ENCODE measurements at regions of chr1 and their contacts with region 1.

Region 1: GRCh38 chr1:111334169-111334568 is 43.5 kb downstream of the CHIA start:
- DNase-seq: peak; percentile 50
- ATAC-seq: peak; percentile 83
- H3K4me3 ChIP-seq: no peak overlapping the region
- H3K27ac ChIP-seq: no peak overlapping the region
- H3K4me1 ChIP-seq: peaks cover 8% of the 10 kb centered on the region
- H3K27me3 ChIP-seq: no peaks in the 10 kb centered on the region; a peak in 1 of 5 replicates
- CTCF ChIP-seq: peak; percentile 84
- EP300 ChIP-seq: no peak
- POLR2A ChIP-seq: no peak
- RAD21 ChIP-seq: peak; percentile 88

Region 2: GRCh38 chr1:111139956-111140679 is 194.1 kb before region 1 on chr1 and contains the starts of genes CEPT1 and DRAM2:
- CTCF ChIA-PET with region 1: no interaction called
- POLR2A ChIA-PET with region 1: no interaction called
- in situ Hi-C with region 1: no loop called
- intact Hi-C with region 1: loop called (anchors 10 kb)
- DNase-seq: peak; percentile 88
- ATAC-seq: peak; percentile 80
- H3K4me3 ChIP-seq: peak within 1 kb of the TSS; percentile 82 to 90 (median 84)
- H3K27ac ChIP-seq: peak within 1 kb of the TSS; percentile 96
- H3K4me1 ChIP-seq: peaks cover 45% of the 10 kb centered on the region
- H3K27me3 ChIP-seq: no peaks in the 10 kb centered on the region
- CTCF ChIP-seq: peak; percentile 33
- EP300 ChIP-seq: no peak
- POLR2A ChIP-seq: peak; percentile 72 to 77
- RAD21 ChIP-seq: 0 out of 2 replicates have a peak, but pooled peaks have one; percentile 9
- total RNA-seq, gene CEPT1: 33.6 and 48.2 TPM in 2 replicates
- total RNA-seq, gene DRAM2: 22.9 and 33.2 TPM in 2 replicates

Region 3: GRCh38 chr1:111222308-111223125 is 111.7 kb before region 1 on chr1:
- CTCF ChIA-PET with region 1: interaction called, 77 read pairs
- POLR2A ChIA-PET with region 1: interaction called, 6 read pairs
- in situ Hi-C with region 1: loop called (anchors 5 kb)
- intact Hi-C with region 1: loop called (anchors 1 kb)
- DNase-seq: peak; percentile 62
- ATAC-seq: peak; percentile 97
- H3K4me3 ChIP-seq: peak overlapping the region in 2 of 3 experiments; percentile 8 to 39; a peak in 3 of 6 replicates
- H3K27ac ChIP-seq: no peak overlapping the region
- H3K4me1 ChIP-seq: peaks cover 52% of the 10 kb centered on the region
- H3K27me3 ChIP-seq: no peaks in the 10 kb centered on the region; a peak in 1 of 5 replicates
- CTCF ChIP-seq: peak; percentile 97
- EP300 ChIP-seq: no peak
- POLR2A ChIP-seq: no peak
- RAD21 ChIP-seq: peak; percentile 97

Region 4: GRCh38 chr1:111285879-111286278 is 48.3 kb before region 1 on chr1:
- CTCF ChIA-PET with region 1: no interaction called
- POLR2A ChIA-PET with region 1: no interaction called
- in situ Hi-C with region 1: no loop called
- intact Hi-C with region 1: loop called (anchors 5 kb)
- DNase-seq: no peak
- ATAC-seq: peak; percentile 45; the same call in 2 of the 3 replicates
- H3K4me3 ChIP-seq: no peak overlapping the region
- H3K27ac ChIP-seq: no peak overlapping the region
- H3K4me1 ChIP-seq: peaks cover 30% of the 10 kb centered on the region
- H3K27me3 ChIP-seq: peaks cover 0 to 2% of the 10 kb centered on the region in 2 experiments; a peak in 1 of 5 replicates
- CTCF ChIP-seq: no peak
- EP300 ChIP-seq: no peak
- POLR2A ChIP-seq: no peak
- RAD21 ChIP-seq: no peak

Region 5: GRCh38 chr1:111320106-111320879 is 13.9 kb before region 1 on chr1:
- CTCF ChIA-PET with region 1: no interaction called
- POLR2A ChIA-PET with region 1: no interaction called
- in situ Hi-C with region 1: no loop called
- intact Hi-C with region 1: no loop called
- DNase-seq: no peak
- ATAC-seq: peak; percentile 65
- H3K4me3 ChIP-seq: no peak overlapping the region; a peak in 1 of 6 replicates
- H3K27ac ChIP-seq: no peak overlapping the region
- H3K4me1 ChIP-seq: peaks cover 7% of the 10 kb centered on the region; the same call in 1 of the 2 replicates
- H3K27me3 ChIP-seq: peaks cover 0 to 18% of the 10 kb centered on the region in 2 experiments; a peak in 2 of 5 replicates
- CTCF ChIP-seq: peak; percentile 23
- EP300 ChIP-seq: no peak
- POLR2A ChIP-seq: no peak
- RAD21 ChIP-seq: no peak